ENCODE measurements at regions of chr2 and their contacts with region 1.

Region 1: DNA sequence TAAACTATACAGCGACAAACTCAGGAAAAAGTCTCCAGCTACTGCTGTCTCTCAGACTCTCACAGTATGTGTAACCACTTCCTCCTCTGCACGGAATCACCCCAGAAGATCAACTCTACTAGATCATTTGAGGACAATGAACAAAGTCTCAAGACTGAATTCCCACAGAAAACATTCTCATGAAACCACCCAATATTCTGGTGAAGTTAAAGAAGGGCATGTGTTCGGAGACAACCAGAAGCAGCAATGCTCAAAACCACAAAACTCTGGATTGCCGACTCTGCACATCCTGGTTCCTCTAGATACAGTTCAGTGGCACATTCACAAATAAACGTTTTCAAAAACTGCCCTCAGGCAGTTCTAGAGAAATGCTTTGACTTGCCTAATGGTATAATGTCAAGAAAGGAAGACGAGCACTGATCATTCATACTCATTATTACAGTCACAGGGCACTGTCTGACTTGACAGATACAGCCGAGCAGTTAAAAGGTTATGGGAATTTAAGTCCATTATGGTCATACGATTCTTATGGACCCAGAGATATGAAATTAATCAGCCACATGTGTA is 91.9 kb upstream of the STK17B start:
- DNase-seq: peak; percentile 51
- ATAC-seq: peak; percentile 62
- H3K4me3 Mint-ChIP-seq: peak overlapping the region; percentile 70
- H3K27ac Mint-ChIP-seq: peak overlapping the region; percentile 95
- H3K4me1 Mint-ChIP-seq: peaks cover 86% of the 10 kb centered on the region
- H3K27me3 Mint-ChIP-seq: no peaks in the 10 kb centered on the region

Region 2: GRCh38 chr2:196160101-196160500 is 103.2 kb before region 1 on chr2:
- CTCF ChIA-PET with region 1: interaction called, 4 read pairs
- POLR2A ChIA-PET with region 1: interaction called, 3 read pairs
- intact Hi-C with region 1: loop called (anchors 1 kb)
- DNase-seq: peak; percentile 73
- ATAC-seq: peak; percentile 45
- H3K4me3 Mint-ChIP-seq: peak overlapping the region; percentile 56
- H3K27ac Mint-ChIP-seq: peak overlapping the region; percentile 90
- H3K4me1 Mint-ChIP-seq: peaks cover 76% of the 10 kb centered on the region
- H3K27me3 Mint-ChIP-seq: no peaks in the 10 kb centered on the region

Region 3: DNA sequence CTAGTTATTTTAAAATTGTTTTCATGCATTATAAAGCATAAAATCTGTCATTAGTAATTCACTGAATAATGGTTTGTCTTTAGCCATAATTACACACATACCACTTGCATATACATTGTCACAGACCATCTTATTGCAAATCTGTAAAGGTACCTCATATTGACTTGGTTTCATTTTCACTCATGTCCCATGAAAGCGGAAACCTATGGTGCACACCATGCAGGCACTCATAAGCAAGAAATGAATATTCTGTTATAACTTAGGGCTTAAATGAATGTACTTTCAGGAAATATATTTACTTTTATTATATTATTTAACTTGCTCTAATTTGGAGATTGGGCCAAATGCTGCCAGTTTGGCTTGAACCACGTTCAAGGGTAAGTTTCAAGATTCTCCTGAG is 62.7 kb before region 1 on chr2:
- CTCF ChIA-PET with region 1: interaction called, 6 read pairs
- POLR2A ChIA-PET with region 1: interaction called, 4 read pairs
- intact Hi-C with region 1: loop called (anchors 2 kb)
- DNase-seq: peak; percentile 65
- ATAC-seq: peak; percentile 92
- H3K4me3 Mint-ChIP-seq: peak overlapping the region; percentile 47
- H3K27ac Mint-ChIP-seq: peak overlapping the region; percentile 90
- H3K4me1 Mint-ChIP-seq: peaks cover 49% of the 10 kb centered on the region
- H3K27me3 Mint-ChIP-seq: no peaks in the 10 kb centered on the region

Region 4: GRCh38 chr2:196239622-196240587 is 23.4 kb before region 1 on chr2:
- CTCF ChIA-PET with region 1: interaction called, 15 read pairs
- POLR2A ChIA-PET with region 1: interaction called, 10 read pairs
- intact Hi-C with region 1: loop called (anchors 1 kb)
- DNase-seq: peak; percentile 91
- ATAC-seq: peak; percentile 58
- H3K4me3 Mint-ChIP-seq: peak overlapping the region; percentile 46
- H3K27ac Mint-ChIP-seq: peak overlapping the region; percentile 97
- H3K4me1 Mint-ChIP-seq: peaks cover 91% of the 10 kb centered on the region
- H3K27me3 Mint-ChIP-seq: no peaks in the 10 kb centered on the region

Region 5: DNA sequence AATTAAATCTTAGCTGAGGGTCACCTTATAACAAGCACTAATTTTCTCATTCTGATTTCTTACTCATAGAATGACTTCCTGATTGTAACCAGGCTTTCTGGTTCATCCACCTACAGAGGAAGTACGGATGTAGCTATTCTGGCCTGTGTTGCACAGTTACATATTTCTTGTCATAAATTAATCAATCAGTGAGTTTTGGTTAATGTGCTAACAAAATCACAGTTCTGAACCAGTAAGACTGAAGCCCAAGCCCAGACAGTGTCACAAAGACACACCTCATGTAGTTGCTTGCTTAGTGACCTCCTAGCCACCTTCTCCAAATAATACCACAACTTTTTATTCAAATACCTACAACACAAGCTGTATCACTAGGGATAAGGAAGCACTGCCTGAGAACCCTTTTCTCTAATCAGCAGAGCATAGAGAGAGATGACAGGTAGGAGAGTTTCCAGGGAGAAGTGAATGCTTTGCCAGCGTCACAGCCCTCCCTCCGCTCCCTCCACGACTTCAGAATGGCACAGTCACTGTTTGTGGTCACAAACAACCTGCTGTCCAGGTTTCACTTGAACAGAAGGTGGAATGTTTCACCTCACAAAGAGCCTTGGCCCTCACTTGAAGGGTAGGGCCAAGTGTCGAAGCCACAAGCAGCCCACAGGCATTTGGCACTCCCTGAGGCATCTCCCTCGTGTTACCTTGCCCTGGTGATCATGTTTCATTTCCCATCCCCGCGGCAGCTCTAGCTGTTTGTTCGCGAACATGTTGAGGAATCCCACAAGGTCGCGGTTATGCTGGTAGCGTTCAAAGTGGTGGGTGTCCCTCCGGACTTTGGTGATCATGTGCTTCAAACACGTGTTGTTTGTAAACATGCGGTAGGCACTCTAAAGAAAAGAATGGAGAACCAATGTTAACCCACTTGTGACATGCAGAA is 28.9 kb after region 1 on chr2:
- CTCF ChIA-PET with region 1: interaction called, 3 read pairs
- POLR2A ChIA-PET with region 1: interaction called, 4 read pairs
- intact Hi-C with region 1: loop called in 1 of 2 experiments (anchors 1 kb)
- DNase-seq: no peak
- ATAC-seq: peak; percentile 16
- H3K4me3 Mint-ChIP-seq: no peak overlapping the region
- H3K27ac Mint-ChIP-seq: peak overlapping the region; percentile 57
- H3K4me1 Mint-ChIP-seq: peaks cover 55% of the 10 kb centered on the region
- H3K27me3 Mint-ChIP-seq: no peaks in the 10 kb centered on the region

Region 6: DNA sequence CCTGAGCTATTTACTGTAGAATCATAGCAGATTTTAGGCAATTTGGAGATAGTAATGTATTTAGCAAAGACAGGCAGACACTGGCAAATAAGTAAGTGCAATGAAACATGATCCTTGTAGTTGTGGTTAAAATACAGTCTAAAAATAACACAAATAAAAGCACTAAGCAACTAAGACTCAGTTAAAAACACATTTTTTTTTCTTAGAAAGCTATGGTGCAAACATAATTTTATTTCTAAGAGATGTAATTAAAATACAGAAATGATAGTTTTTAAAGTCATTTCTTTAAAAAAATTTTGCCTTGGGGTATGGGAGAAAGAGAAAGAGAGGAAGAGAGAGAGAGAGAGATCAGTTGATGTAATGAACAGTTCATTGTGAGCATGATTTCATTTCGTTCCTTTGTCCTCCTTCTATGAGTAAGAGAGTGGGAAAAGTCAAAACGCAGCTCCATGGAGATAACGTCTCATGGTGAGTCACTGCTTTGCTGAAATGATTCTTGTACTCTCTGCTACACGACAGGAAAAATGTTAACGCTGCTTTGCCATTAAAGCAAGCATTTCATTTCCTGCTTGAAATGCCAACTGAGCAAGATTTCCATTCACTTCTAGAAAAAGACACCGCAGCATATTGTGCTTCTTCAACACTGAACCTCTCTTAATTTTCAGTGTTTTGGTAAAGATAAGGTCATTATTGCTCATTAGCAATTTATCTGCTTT is 724.5 kb after region 1 on chr2:
- CTCF ChIA-PET with region 1: no interaction called
- POLR2A ChIA-PET with region 1: no interaction called
- intact Hi-C with region 1: loop called in 1 of 2 experiments (anchors 10 kb)
- DNase-seq: peak; percentile 62
- ATAC-seq: peak; percentile 93
- H3K4me3 Mint-ChIP-seq: peak overlapping the region; percentile 38
- H3K27ac Mint-ChIP-seq: peak overlapping the region; percentile 98
- H3K4me1 Mint-ChIP-seq: peaks cover 65% of the 10 kb centered on the region
- H3K27me3 Mint-ChIP-seq: no peaks in the 10 kb centered on the region